Ascending aorta (tissue), 2 donors: ENCODE measurements at regions of chr11 and their contacts with region 1.

Region 1: GRCh38 chr11:60831143-60831500 is 10.8 kb upstream of the CCDC86 start:
- DNase-seq: peak; percentile 24 to 90
- H3K4me3 ChIP-seq: no peak overlapping the region
- H3K27ac ChIP-seq: no peak overlapping the region
- H3K4me1 ChIP-seq: no peaks in the 10 kb centered on the region
- H3K27me3 ChIP-seq: no peaks in the 10 kb centered on the region
- CTCF ChIP-seq: peak; percentile 73 to 92 (median 86)

Region 2: DNA sequence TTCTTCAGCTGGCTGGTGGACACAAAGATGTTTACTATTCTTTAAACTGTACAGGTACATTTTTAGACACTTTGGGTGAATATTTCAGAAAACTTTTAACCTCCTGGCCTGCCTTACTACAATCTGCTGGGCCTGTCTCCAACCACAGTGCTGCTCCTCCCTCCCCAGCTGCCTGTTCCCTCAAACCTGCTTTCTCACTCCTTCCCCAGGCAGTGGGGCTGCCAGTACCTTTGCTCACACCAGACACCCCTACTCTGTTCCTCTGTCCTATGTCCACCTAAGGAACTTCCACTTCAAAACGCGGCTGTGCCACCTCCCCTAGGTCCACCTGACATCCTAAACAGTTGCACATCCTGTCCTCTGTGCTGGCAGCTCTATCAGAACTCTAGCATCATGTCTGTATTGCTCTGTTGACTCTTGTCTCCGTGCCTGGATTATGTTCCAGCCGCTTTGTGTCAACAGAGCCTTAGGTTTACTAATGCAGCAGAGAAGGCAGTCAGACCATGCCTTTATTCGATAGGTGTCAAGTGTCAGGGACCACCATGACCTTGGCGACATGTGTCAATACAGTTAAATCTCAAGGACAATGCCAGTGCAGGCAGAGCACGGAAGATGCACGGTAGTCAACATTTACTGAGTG is 49.6 kb after region 1 on chr11:
- intact Hi-C with region 1: no loop called
- DNase-seq: no peak
- H3K4me3 ChIP-seq: no peak overlapping the region
- H3K27ac ChIP-seq: no peak overlapping the region
- H3K4me1 ChIP-seq: peaks cover 0 to 4% of the 10 kb centered on the region in 2 donors
- H3K27me3 ChIP-seq: no peaks in the 10 kb centered on the region
- CTCF ChIP-seq: no peak

Region 3: DNA sequence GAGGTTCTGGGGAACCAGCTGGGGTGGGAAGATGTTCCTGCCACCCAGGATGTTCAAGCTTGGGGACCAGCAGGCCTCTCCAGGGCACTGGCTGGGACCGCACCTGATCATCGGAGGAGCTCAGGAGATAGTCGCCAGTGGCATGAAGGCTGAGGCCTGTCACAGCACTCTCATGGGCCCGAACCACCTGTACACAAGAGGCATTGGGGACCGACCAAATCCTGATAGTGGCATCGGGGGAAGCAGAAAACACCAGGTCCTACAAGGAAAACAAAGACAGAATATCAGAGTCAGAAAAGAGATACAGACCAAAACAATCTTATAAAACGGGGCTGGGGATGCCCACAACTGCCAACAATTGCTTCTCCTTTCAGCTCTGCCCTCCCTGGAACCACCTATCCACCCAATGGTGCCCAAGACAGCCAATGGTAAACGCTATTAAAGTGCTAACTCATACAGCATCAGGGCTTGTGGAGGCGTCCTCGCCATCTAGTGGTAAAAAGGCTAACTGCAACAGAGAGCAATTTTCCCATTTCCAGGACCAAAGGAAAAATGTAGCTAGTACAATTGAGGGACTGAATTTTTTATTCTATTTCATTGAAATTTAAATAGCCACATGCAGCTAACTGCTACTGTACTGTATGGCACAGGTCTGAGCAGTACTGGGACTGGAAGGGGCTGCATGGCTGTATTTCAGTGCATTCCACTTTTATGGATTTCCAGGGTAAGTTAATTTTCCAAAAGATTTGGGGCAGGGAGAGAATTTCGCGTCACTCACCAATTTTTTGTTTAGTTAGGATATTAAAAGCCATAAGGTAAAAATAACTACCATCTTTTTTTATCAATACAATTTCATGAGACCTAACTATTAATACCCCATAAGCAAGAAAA is 68.2 kb after region 1 on chr11:
- intact Hi-C with region 1: loop called (anchors 1 kb)
- DNase-seq: no peak
- H3K4me3 ChIP-seq: no peak overlapping the region
- H3K27ac ChIP-seq: no peak overlapping the region
- H3K4me1 ChIP-seq: no peaks in the 10 kb centered on the region
- H3K27me3 ChIP-seq: no peaks in the 10 kb centered on the region
- CTCF ChIP-seq: peak; percentile 70 to 97 (median 95)

Region 4: GRCh38 chr11:61129639-61130523 is 298.8 kb after region 1 on chr11:
- intact Hi-C with region 1: loop called (anchors 5 kb)
- DNase-seq: peak; percentile 38 to 91
- H3K4me3 ChIP-seq: peak overlapping the region; percentile 23 to 24
- H3K27ac ChIP-seq: peak overlapping the region; percentile 37 to 64
- H3K4me1 ChIP-seq: peaks cover 5 to 12% of the 10 kb centered on the region in 2 donors
- H3K27me3 ChIP-seq: no peaks in the 10 kb centered on the region
- CTCF ChIP-seq: peak; percentile 99 to 100 (median 99)

Region 5: GRCh38 chr11:61187505-61188130 is 356.5 kb after region 1 on chr11:
- intact Hi-C with region 1: loop called (anchors 2 kb)
- DNase-seq: peak in 1 of 2 donors; percentile 85
- H3K4me3 ChIP-seq: no peak overlapping the region
- H3K27ac ChIP-seq: no peak overlapping the region
- H3K4me1 ChIP-seq: no peaks in the 10 kb centered on the region
- H3K27me3 ChIP-seq: no peaks in the 10 kb centered on the region
- CTCF ChIP-seq: peak; percentile 76 to 97 (median 86)